Colonic mucosa (tissue), 4 donors: ENCODE measurements at regions of chr11 and their contacts with region 1.

Region 1: DNA sequence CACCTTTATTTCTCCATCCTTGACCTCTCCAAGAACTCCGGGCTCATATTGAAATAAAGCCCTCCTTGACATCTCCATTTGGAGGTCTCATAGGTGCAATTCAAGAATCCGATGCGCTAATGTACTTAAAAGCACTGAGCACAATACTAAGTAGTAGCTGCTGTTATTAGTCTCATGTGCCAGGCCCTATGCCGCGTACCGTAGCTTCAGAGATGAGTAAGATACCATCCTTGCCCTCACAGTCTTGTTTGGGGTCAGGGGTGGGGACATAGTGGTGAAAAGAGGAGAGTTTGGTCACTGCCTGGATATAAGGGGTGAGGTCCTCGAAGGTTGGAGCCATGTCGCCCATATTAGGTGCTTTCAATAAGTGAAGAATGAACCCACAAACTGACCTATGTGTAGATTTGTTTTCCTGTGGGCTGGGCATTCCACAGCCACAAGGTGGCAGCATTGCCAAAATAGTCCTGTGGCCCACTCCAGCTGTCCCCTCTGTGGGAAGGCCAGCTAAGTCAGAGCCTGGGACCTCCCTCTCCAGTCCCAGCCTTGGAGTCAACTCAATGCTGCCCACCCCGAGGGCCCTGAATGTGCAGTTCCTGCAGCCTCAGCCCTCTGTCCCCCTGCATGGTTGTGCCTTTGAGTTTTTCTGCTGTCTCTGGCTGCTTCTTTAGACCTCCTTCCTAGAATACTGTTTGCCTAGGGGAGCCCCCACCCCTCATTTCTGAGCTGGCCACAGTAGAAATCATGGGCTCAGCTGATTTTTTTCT is 6.5 kb downstream of the DCPS start:
- DNase-seq: peak; percentile 81
- H3K4me3 ChIP-seq: no peak overlapping the region
- H3K27ac ChIP-seq: no peak overlapping the region
- H3K4me1 ChIP-seq: peaks cover 4% of the 10 kb centered on the region
- H3K27me3 ChIP-seq: no peaks in the 10 kb centered on the region
- CTCF ChIP-seq: peak; percentile 85

Region 2: DNA sequence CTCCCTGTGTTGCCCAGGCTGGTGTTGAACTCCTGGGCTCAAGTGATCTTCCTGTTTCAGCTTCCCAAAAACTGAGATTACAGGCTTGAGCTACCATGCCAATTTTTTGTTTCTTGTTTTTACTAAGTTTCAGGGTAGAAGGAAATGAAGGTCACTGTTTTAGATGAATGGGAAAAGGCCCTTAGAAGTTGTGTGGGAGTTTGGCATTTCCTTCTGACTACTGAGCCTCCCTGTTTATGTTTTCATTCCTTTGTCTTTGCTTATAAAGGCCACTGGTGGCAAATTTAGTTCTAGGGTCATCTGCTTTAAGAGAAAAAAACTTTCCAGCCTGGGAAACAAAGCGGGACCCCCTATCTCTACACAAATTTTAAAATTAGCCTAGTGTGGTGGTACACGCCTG is 63.8 kb before region 1 on chr11:
- intact Hi-C with region 1: no loop called
- DNase-seq: no peak
- H3K4me3 ChIP-seq: no peak overlapping the region
- H3K27ac ChIP-seq: no peak overlapping the region
- H3K4me1 ChIP-seq: no peaks in the 10 kb centered on the region
- H3K27me3 ChIP-seq: no peaks in the 10 kb centered on the region
- CTCF ChIP-seq: no peak

Region 3: DNA sequence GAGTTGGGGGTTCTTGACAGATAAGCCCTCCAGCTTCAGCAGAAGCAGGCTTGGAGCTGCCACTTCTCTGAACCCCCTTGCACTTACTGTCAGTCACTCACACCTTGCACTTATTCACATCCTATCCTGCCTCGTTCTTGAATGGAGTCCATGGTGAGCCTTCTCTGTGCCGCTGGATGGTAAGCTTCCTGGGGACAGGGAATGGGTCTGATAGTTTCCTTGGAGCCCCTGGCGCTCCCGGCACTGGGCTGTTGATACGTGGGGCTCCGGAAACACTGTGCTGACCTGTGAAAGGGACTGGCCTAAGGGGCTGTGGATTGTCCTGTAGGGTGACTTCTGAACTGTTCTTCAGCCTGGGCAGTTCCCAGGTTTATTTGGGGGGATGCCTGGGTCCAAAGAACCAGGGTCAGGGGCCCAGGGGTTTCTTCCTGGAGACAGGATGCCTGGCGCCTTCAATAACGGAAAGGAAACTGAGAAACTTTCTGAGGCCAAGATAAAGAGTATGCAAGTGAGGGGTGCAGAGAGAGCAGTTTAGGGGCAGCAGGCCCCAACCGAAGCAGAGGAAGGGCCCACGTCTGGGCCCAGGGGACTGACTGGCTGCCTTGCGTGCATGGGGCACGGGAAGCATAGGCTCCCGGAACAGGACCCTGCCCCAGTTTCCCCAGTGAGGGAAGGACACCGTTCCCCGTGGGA is 44.4 kb after region 1 on chr11:
- intact Hi-C with region 1: loop called (anchors 5 kb)
- DNase-seq: no peak
- H3K4me3 ChIP-seq: peak overlapping the region; percentile 59
- H3K27ac ChIP-seq: peak overlapping the region; percentile 68
- H3K4me1 ChIP-seq: peaks cover 6% of the 10 kb centered on the region
- H3K27me3 ChIP-seq: no peaks in the 10 kb centered on the region
- CTCF ChIP-seq: no peak

Region 4: GRCh38 chr11:126366065-126366785 is 55.8 kb after region 1 on chr11:
- intact Hi-C with region 1: no loop called
- DNase-seq: no peak
- H3K4me3 ChIP-seq: no peak overlapping the region
- H3K27ac ChIP-seq: peak overlapping the region; percentile 71
- H3K4me1 ChIP-seq: peaks cover 5% of the 10 kb centered on the region
- H3K27me3 ChIP-seq: no peaks in the 10 kb centered on the region
- CTCF ChIP-seq: no peak

Region 5: DNA sequence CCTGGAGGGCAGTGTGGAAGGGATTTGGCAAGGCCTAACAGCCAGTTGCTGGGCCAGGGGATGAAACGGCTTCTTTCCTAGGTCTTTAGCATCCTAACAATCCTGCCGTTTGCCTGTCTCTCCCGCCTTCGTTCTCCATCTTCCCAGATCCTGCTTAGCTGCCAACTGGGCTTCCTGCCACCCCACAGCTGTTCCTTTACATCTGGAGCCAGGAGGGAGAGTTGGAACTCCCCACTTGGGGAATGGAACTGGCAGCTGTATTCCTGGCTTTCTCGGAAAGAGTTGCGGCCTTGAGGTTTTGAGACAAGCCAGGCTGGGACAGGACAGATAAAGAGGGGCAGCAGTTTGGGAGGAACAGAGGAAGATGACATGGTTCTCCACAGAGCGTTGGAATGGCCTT is 104.7 kb after region 1 on chr11:
- intact Hi-C with region 1: no loop called
- DNase-seq: peak; percentile 77
- H3K4me3 ChIP-seq: no peak overlapping the region
- H3K27ac ChIP-seq: peak overlapping the region; percentile 68
- H3K4me1 ChIP-seq: peaks cover 3% of the 10 kb centered on the region
- H3K27me3 ChIP-seq: no peaks in the 10 kb centered on the region
- CTCF ChIP-seq: no peak

Region 6: GRCh38 chr11:126431401-126432064 is 121.1 kb after region 1 on chr11:
- intact Hi-C with region 1: loop called (anchors 10 kb)
- DNase-seq: peak; percentile 84
- H3K4me3 ChIP-seq: no peak overlapping the region
- H3K27ac ChIP-seq: peak overlapping the region; percentile 91
- H3K4me1 ChIP-seq: peaks cover 14% of the 10 kb centered on the region
- H3K27me3 ChIP-seq: no peaks in the 10 kb centered on the region
- CTCF ChIP-seq: no peak

Region 7: GRCh38 chr11:126480410-126481302 is 170.2 kb after region 1 on chr11:
- intact Hi-C with region 1: loop called (anchors 2 kb)
- DNase-seq: peak; percentile 85
- H3K4me3 ChIP-seq: no peak overlapping the region
- H3K27ac ChIP-seq: peak overlapping the region; percentile 19
- H3K4me1 ChIP-seq: peaks cover 5% of the 10 kb centered on the region
- H3K27me3 ChIP-seq: no peaks in the 10 kb centered on the region
- CTCF ChIP-seq: peak; percentile 83